ENCODE measurements at regions of chr2 and their contacts with region 1.

Region 1: GRCh38 chr2:231436957-231437356 is 27.3 kb downstream of the NCL start:
- DNase-seq: no peak
- ATAC-seq: no peak
- H3K4me3 ChIP-seq: no peak overlapping the region
- H3K27ac ChIP-seq: no peak overlapping the region
- H3K4me1 ChIP-seq: no peaks in the 10 kb centered on the region
- H3K27me3 ChIP-seq: no peaks in the 10 kb centered on the region
- CTCF ChIP-seq: no peak
- POLR2A ChIP-seq: no peak
- RAD21 ChIP-seq: no peak

Region 2: DNA sequence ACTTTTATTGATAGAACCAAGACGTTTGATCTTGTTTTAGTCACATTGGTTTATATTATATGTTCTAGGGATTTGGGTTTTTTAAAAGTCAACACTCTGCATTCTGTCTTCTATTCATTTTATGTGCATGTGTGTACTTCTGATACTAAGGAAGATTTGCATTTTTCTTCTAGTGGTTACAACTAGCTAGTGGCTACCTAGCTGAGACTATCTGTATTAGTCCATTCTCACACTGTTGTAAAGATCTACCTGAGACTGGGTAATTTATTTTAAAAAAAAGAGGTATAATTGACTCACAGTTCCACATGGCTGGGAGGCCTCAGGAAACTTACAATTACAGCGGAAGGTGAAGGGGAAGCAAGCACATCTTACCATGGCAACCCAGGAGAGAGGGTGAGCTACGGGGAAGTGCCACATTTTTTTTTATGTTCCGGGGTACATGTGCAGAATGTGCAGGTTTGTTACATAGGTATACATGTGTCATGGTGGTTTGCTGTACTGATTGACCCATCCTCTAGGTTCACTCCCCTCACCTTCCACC is 951.1 kb before region 1 on chr2:
- CTCF ChIA-PET with region 1: no interaction called
- POLR2A ChIA-PET with region 1: no interaction called
- dilution Hi-C with region 1: no loop called
- in situ Hi-C with region 1: no loop called
- intact Hi-C with region 1: no loop called
- DNase-seq: no peak
- ATAC-seq: no peak
- H3K4me3 ChIP-seq: no peak overlapping the region
- H3K27ac ChIP-seq: no peak overlapping the region
- H3K4me1 ChIP-seq: no peaks in the 10 kb centered on the region
- H3K27me3 ChIP-seq: no peaks in the 10 kb centered on the region
- CTCF ChIP-seq: no peak
- POLR2A ChIP-seq: no peak
- RAD21 ChIP-seq: no peak

Region 3: DNA sequence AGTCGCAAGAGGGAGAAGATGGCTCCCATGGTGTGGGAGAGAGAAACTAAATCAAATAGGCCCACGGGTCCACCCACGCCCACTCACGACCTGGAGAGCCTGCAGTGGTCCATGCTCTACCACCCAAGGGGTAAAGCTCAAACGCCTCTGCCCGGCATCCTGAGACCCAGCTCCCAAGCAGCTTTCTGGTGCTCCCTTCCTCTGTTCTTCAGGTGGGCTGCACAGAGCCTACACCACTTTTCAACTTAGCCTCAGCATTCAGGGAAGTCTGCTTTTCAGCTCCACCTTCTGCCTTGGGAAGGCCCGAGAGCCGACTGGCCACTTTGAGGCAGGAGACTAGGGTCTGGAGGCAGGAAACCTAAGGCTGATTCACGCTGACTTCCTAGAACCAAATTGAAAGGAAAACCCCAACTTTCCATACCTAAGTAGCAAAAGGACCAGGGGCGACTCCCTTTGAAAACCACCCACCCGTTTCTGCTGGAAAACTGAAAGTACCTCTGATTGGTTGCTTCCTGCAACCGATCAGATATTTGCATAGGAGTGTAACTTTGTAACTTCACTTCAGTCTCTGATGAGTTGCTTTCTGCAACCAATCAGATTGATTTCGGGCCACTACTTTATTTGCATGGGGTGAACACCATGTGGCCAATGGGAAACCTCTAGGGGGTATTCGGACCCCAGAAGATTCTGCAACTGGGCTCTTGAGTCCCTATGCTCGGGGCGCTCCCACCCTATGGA is 467.9 kb before region 1 on chr2:
- CTCF ChIA-PET with region 1: no interaction called
- POLR2A ChIA-PET with region 1: no interaction called
- dilution Hi-C with region 1: no loop called
- in situ Hi-C with region 1: no loop called
- intact Hi-C with region 1: no loop called
- DNase-seq: no peak
- ATAC-seq: no peak
- H3K4me3 ChIP-seq: 0 out of 2 replicates have a peak overlapping the region, but pooled peaks have one; percentile 11
- H3K27ac ChIP-seq: no peak overlapping the region
- H3K4me1 ChIP-seq: 0 out of 2 replicates have a peak, but pooled peaks cover 2% of the 10 kb centered on the region
- H3K27me3 ChIP-seq: peaks cover 4% of the 10 kb centered on the region
- CTCF ChIP-seq: no peak
- POLR2A ChIP-seq: no peak
- RAD21 ChIP-seq: no peak

Region 4: DNA sequence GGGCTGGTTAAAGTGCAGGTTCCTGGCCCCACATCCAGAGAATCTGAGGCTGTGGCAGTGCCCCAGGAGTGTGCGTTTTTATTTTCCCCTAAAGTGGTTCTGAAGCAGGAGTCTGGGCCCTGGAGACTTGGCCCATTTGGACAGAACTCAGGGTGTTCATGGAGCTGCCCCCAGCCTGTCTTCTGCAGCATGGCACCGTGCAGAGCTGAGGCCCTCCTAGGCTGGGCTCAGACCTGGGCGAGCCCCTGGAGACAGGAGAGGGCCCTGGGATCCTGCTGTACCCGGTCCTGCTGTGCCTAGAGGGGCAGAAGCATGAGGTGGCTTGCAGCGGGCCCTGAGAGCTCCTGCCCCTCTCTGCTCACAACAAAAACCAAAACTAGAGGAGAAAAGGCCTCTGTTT is 100.3 kb before region 1 on chr2:
- CTCF ChIA-PET with region 1: no interaction called
- POLR2A ChIA-PET with region 1: interaction called, 12 read pairs
- dilution Hi-C with region 1: no loop called
- in situ Hi-C with region 1: no loop called
- intact Hi-C with region 1: no loop called
- DNase-seq: no peak
- ATAC-seq: no peak
- H3K4me3 ChIP-seq: no peak overlapping the region
- H3K27ac ChIP-seq: no peak overlapping the region
- H3K4me1 ChIP-seq: no peaks in the 10 kb centered on the region
- H3K27me3 ChIP-seq: no peaks in the 10 kb centered on the region
- CTCF ChIP-seq: no peak
- POLR2A ChIP-seq: no peak
- RAD21 ChIP-seq: no peak